AG04449 (cell line): ENCODE measurements at regions of chr22 and their contacts with region 1.

Region 1: DNA sequence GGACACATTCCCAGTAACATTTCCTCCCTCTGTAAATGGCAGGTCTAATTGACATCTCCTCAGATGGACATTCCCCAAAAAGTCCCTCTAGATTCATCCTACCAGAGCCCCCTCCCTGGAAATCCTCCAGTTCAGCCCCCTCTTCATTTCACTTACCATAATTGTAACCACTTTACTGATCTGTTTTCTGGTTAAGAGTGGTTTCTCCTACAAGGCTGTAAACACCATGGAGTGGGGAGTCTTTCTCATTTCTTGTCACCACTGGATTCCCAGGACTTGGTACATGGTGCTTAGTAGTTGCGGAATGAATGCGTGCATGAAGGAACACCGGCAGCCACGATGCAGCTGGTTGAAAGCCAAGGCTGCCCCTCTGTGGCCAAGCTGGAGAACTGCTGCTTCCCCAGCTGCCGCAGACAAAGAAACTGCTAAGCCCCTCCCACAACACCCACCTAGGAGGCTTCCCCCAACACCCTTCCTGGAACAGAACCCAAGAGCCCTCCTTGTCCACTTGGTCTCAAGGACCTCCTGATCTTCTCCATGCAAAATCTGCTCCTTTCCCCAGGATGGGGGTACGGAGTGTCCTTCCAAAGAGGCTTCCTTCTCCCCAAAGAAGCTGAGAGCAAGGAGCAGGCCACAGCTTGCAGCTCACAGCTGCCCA is 18.6 kb upstream of the SCARF2 start:
- DNase-seq: peak; percentile 26
- H3K4me3 ChIP-seq: no peak overlapping the region
- CTCF ChIP-seq: peak; percentile 88

Region 2: GRCh38 chr22:20380486-20380885 is 75.7 kb before region 1 on chr22:
- CTCF ChIA-PET with region 1: no interaction called
- POLR2A ChIA-PET with region 1: no interaction called
- DNase-seq: no peak
- H3K4me3 ChIP-seq: no peak overlapping the region
- CTCF ChIP-seq: no peak

Region 3: DNA sequence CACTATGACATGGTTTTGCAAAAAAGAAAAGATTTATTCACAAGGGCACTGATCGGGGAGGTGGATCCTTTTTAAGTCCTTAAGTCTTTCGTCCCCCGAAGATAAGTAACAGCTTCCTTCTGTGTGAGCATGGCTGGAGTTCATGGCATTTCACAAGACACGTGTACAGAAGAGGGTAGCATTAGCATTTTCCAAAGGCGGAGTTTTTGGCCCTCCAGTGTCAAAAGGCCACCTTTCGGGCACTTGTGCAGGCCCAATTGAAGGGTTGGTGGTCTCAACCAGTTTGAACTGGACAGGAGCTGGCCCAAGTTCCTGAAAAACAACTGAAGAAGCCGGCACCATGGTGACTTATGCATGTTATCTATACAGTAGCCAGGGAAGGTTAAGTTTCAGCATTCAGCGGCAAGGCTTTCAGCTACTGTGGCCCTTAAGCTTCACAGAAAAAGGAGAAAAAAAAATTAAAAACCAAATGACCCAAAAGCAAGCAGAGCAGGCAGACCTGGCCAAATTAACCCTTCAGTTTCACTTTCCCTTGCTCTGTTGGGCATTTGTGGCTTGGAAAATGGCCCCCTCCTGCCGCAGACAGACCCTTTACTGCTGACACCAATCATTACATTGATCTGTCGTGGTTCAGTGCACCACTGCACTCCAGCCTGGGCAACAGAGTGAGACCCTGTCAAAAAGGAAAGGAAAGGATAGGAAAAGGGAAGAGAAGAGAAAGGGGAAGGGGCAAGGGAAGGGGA is 43.5 kb before region 1 on chr22:
- CTCF ChIA-PET with region 1: interaction called, 152 read pairs
- POLR2A ChIA-PET with region 1: interaction called, 7 read pairs
- DNase-seq: no peak
- H3K4me3 ChIP-seq: no peak overlapping the region
- CTCF ChIP-seq: no peak

Region 4: GRCh38 chr22:20514658-20515406 is 58.6 kb after region 1 on chr22:
- CTCF ChIA-PET with region 1: no interaction called
- POLR2A ChIA-PET with region 1: no interaction called
- DNase-seq: peak; percentile 77
- H3K4me3 ChIP-seq: no peak overlapping the region
- CTCF ChIP-seq: no peak

Region 5: DNA sequence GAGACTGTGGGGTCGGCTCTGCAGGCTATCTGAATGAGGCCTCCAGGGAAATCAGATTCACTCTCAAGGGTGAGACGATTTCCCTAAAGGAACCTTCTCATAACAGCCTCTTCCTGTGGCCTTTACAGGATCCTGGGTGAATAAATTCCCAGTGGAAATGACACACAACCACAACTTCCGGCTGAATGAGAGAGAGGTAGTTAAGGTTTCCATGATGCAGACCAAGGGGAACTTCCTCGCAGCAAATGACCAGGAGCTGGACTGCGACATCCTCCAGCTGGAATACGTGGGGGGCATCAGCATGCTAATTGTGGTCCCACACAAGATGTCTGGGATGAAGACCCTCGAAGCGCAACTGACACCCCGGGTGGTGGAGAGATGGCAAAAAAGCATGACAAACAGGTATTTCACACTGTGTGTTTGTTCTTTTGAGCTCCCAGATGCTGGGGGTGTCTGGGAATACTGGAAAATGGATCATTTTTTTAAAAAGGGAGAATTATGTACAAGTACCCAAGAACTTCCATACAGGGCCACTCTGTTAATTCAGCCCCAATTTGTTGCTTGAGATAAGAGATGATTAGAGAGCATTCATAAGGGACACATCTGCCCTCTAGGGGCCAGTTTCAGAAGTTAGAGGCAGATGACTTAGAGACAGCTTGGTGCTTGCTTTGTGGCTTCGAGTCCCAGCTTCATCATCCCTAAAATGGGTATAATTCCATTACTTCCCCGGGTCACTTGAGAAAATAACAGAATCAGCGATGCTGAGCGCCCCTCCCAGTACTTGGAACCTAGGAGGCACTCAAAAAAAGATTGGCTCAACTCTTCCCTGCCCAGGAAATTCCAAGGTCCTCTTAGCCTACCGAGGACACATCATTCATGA is 327.9 kb after region 1 on chr22:
- CTCF ChIA-PET with region 1: no interaction called
- POLR2A ChIA-PET with region 1: no interaction called
- DNase-seq: no peak
- H3K4me3 ChIP-seq: no peak overlapping the region
- CTCF ChIP-seq: peak; percentile 70